Activated CD4-positive, alpha-beta T cell treated with anti-CD3 and anti-CD28 coated beads, Interleukin-2, amount 10 ng/mL, durations not matched to agents 7 days and 5 days (primary cell): ENCODE measurements at regions of chr2 and their contacts with region 1.

Region 1: DNA sequence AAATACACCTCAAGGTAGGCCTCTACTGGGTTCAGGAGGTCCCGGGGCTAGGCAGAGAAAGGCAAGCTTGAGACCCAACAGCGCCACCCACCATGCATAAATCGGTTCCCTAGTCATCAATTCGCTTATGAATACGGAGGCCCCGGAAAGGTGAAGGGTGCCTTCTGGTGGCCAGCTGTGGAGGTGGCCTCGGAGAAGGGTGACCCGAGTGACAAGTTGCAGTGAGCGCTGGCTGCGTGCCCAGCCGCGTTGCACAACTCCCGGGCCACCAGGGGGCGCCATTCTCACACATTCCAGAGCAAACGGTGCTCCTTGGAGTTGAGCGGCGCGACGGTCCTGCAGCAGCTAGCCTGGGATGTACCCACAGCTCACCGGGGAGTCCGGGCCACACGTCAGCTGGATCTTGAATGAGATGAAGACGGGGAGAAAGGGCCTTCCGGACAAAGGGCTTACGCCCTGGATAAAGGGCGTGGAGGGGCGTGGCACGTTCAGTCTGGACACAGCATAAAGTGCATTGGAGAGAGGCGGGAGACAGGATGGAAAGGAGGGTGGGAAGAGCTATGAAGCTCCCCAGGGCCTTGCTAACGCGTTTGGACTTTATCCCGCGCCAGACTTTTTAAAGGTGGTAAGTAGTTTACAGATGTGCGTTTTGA is 20.4 kb downstream of the TMSB10 start:
- DNase-seq: peak; percentile 98
- H3K4me3 Mint-ChIP-seq: peak overlapping the region; percentile 79
- H3K27ac Mint-ChIP-seq: peak overlapping the region; percentile 90
- H3K4me1 Mint-ChIP-seq: peaks cover 53% of the 10 kb centered on the region
- H3K27me3 Mint-ChIP-seq: no peaks in the 10 kb centered on the region

Region 2: DNA sequence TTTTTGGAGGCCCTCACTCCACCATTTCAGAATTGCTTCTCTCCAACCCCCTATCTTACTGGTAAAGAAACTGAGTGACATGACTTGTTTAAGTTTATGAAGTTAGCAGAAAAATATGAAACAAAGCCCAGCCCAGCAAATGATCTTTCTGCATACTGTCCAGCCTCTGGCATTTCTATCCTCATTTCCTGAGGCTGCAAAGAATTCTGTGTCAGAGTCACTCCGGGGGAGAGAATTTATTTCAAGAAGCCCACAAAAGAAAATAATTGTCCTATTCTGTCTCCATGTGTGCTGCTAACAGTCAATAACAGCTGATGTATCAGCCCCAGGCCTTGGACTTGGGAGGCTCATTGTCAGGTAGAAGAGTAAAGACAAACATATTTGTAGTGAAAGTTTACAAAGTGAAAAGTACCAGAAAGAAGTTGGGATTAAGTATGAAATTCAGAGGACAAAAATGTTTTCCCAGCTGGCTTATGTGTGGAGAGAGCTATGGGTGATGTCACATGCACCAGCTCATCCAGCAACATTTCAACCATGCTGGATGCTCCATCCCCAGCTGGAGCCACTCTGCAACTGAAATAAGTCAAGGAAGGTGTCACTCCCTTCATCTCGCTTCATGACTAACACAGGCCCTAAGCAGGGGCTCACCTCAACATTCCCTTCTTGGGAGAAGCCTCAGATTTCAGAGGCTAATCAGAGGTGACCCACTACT is 87.3 kb before region 1 on chr2:
- CTCF ChIA-PET with region 1: interaction called, 12 read pairs
- POLR2A ChIA-PET with region 1: no interaction called
- DNase-seq: no peak
- H3K4me3 Mint-ChIP-seq: no peak overlapping the region
- H3K27ac Mint-ChIP-seq: peak overlapping the region; percentile 9
- H3K4me1 Mint-ChIP-seq: peaks cover 61% of the 10 kb centered on the region
- H3K27me3 Mint-ChIP-seq: no peaks in the 10 kb centered on the region

Region 3: GRCh38 chr2:84870306-84870705 is 55.5 kb before region 1 on chr2:
- CTCF ChIA-PET with region 1: interaction called, 69 read pairs
- POLR2A ChIA-PET with region 1: no interaction called
- DNase-seq: no peak
- H3K4me3 Mint-ChIP-seq: no peak overlapping the region
- H3K27ac Mint-ChIP-seq: no peak overlapping the region
- H3K4me1 Mint-ChIP-seq: peaks cover 74% of the 10 kb centered on the region
- H3K27me3 Mint-ChIP-seq: no peaks in the 10 kb centered on the region

Region 4: DNA sequence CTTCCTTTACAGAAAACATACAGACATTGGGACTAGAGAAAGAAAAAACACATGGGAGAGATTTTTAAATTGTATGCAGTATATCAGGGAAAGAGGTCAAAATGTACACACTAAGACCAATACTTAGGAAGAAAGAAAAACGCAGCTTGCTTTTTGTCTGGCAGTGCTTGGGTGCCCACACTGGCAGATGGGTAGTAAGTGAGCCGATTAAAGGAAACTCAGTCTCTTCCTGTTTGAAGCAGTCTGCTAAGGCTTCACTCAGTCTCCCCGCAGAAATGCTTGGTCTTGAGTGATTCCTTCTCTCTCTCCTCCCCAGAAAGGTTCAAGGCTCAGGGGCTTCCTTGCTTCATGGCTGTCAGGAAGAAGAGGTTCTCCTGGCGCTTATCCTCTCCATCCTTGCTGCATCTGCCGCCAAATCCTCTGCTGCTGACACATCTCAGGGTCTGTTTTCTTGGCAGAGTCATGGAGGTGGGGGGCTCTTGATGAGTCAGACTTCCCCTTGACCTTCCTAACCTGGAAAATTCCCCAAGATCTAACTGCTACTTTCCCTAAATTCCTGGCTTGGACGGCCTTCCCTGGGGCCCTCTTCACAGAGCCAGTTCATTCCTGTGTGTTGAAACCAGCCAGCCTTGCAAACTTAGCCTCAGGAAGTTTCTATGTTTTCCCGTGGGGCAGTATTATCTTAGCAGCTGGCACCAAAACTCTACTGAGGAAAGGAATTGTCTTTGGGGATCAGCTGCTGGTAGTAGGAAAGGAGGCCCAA is 30.9 kb before region 1 on chr2:
- CTCF ChIA-PET with region 1: interaction called, 56 read pairs
- POLR2A ChIA-PET with region 1: interaction called, 3 read pairs
- DNase-seq: peak; percentile 43
- H3K4me3 Mint-ChIP-seq: peak overlapping the region; percentile 17
- H3K27ac Mint-ChIP-seq: peak overlapping the region; percentile 80
- H3K4me1 Mint-ChIP-seq: peaks cover 69% of the 10 kb centered on the region
- H3K27me3 Mint-ChIP-seq: no peaks in the 10 kb centered on the region

Region 5: DNA sequence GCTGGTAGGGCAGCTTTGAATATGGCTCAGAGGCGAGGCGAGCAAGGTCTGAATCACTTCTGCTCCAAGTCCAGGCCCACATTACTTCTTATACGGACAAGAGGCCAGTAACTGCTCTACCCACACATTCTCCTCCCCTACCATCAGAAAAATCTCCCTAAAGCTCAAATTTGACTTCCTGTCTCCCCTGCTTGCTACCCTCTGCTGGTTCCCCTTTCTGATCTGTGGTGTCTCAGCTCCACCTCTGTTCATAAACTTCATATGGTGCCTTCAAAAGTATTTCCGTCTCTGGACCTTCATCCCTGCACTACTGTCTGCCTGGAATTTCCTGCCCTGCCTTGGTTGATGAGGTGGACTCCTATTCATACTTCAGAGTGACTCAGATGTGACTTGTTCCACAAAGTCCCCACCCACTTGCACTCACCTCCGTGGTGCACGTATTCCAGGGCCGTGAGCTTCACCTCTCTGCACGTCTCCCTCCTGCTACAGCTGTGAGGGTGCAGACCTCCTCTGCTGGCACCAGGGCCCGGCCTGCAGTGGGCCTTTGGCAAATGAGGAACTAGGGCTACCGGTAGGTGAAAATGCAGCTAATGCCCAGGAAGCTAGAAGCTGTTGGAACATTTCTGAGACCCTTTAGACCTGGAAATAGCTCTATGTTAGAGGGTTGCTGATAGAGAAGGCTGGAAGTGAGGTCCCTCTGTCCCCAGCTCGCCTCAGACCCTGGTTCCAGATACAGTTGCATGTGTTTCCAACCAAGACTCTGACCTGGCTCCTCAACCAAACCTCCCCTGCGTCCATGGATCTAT is 20.6 kb after region 1 on chr2:
- CTCF ChIA-PET with region 1: interaction called, 179 read pairs
- POLR2A ChIA-PET with region 1: interaction called, 6 read pairs
- DNase-seq: peak; percentile 64
- H3K4me3 Mint-ChIP-seq: peak overlapping the region; percentile 46
- H3K27ac Mint-ChIP-seq: peak overlapping the region; percentile 92
- H3K4me1 Mint-ChIP-seq: peaks cover 55% of the 10 kb centered on the region
- H3K27me3 Mint-ChIP-seq: no peaks in the 10 kb centered on the region

Region 6: GRCh38 chr2:85015653-85016360 is 90.0 kb after region 1 on chr2:
- CTCF ChIA-PET with region 1: interaction called, 10 read pairs
- POLR2A ChIA-PET with region 1: no interaction called
- DNase-seq: no peak
- H3K4me3 Mint-ChIP-seq: no peak overlapping the region
- H3K27ac Mint-ChIP-seq: no peak overlapping the region
- H3K4me1 Mint-ChIP-seq: peaks cover 66% of the 10 kb centered on the region
- H3K27me3 Mint-ChIP-seq: no peaks in the 10 kb centered on the region

Region 7: GRCh38 chr2:85076618-85077274 is 150.9 kb after region 1 on chr2:
- CTCF ChIA-PET with region 1: no interaction called
- POLR2A ChIA-PET with region 1: no interaction called
- DNase-seq: no peak
- H3K4me3 Mint-ChIP-seq: no peak overlapping the region
- H3K27ac Mint-ChIP-seq: no peak overlapping the region
- H3K4me1 Mint-ChIP-seq: no peaks in the 10 kb centered on the region
- H3K27me3 Mint-ChIP-seq: peaks cover 13% of the 10 kb centered on the region